ENCODE measurements at regions of chr22 and their contacts with region 1.

Region 1: DNA sequence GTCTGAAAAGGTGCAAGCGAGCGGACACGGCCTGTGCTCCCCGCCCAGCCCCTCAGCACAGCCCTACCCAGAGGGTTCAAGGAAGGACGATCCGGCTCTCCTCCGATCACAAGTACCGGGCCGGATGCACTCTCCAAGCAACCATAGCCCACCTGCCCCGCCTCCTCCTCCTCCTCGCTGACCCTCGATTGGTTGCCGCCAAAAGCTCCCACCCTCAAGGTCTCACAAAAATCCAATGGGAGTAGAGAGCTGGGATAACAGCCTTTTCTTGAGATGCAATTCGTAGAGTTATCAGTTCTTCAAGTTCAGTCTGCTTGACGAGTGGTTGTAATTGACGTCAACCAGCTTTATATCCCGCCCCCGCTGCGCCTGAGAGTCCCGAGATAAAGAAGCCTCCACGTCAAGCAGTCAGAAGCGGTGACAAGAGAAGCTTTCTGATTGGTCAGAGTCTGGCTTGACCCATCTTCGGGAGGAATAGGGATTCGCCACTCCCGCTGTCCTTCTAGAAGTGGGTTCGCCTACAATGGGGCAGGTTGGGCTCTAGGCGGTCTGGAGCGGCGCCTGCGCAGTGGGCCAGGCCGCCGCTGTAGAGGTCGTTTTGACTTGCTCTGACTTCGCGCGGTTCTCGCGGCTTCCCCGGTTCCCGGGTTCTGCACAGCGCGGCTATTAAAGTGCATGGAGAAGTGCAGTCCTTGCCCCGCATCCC is at the start of gene IFT27:
- DNase-seq: peak; percentile 98
- ATAC-seq: peak; percentile 97
- H3K4me3 Mint-ChIP-seq: peak within 1 kb of the TSS; percentile 84
- H3K27ac Mint-ChIP-seq: peak within 1 kb of the TSS; percentile 92
- H3K4me1 Mint-ChIP-seq: peaks cover 26% of the 10 kb centered on the region
- H3K27me3 Mint-ChIP-seq: no peaks in the 10 kb centered on the region
- total RNA-seq, gene IFT27: 14.9 to 21.6 TPM

Region 2: DNA sequence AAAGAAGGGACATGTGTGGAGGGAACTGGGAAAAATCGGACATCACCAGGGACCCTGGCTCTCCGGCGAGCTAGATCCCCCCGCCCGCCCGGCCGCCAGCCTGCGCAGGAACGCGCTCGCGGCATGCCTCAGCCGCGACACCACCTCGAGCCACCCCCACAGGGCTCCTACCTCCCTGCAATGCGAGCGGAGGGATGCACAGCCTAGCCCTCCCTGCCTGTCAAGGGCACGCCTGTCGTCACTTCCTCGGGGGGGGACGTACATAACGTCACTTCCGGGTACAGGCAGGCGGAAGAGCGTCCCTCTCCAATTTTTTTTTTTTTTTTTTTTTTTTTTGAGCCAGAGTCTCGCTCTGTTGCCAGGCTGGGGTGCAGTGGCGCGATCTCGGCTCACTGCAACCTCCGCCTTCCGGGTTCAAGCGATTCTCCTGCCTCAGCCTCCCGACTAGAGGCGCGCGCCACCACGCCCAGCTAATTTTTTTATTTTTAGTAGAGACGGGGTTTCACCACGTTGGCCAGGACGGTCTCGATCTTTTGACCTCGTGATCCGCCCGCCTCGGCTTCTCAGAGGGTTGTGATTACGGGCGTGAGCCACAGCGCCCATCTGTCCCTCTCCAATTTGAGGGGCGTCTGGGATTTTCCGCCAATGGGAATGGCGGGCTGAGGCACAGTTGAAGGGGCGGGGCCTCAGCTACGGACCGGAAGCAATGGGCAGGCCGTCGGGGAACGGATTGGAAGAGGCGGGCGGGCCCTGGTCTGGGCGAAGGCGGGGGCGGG is 294.5 kb before region 1 on chr22 and contains the start of gene TXN2:
- CTCF ChIA-PET with region 1: no interaction called
- POLR2A ChIA-PET with region 1: no interaction called
- intact Hi-C with region 1: loop called in 1 of 2 experiments (anchors 1 kb)
- DNase-seq: peak; percentile 97
- ATAC-seq: peak; percentile 89
- H3K4me3 Mint-ChIP-seq: peak within 1 kb of the TSS; percentile 81
- H3K27ac Mint-ChIP-seq: peak within 1 kb of the TSS; percentile 94
- H3K4me1 Mint-ChIP-seq: peaks cover 19% of the 10 kb centered on the region
- H3K27me3 Mint-ChIP-seq: no peaks in the 10 kb centered on the region
- total RNA-seq, gene TXN2: 95.5 to 99.1 TPM

Region 3: DNA sequence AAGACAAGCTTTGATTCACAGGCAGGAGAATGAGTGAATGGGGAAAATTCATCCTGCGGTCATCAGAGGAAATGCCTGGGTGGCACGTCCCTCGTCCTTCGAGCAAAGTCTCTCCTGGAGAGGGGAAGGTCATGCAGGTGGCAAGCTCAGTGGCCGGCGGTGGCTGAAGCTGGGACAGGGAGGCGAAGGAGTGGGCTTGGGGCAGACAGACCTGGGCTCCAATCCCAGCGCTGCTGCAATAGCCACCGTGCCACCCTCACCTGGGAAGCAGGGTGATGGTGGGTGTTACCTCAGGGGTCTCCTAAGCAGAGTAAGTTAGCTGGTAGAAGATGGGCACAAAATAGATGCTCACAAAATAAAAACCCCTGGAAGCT is 50.1 kb before region 1 on chr22:
- CTCF ChIA-PET with region 1: no interaction called
- POLR2A ChIA-PET with region 1: no interaction called
- intact Hi-C with region 1: no loop called
- DNase-seq: no peak
- ATAC-seq: no peak
- H3K4me3 Mint-ChIP-seq: no peak overlapping the region
- H3K27ac Mint-ChIP-seq: no peak overlapping the region
- H3K4me1 Mint-ChIP-seq: no peaks in the 10 kb centered on the region
- H3K27me3 Mint-ChIP-seq: peaks cover 16% of the 10 kb centered on the region

Region 4: DNA sequence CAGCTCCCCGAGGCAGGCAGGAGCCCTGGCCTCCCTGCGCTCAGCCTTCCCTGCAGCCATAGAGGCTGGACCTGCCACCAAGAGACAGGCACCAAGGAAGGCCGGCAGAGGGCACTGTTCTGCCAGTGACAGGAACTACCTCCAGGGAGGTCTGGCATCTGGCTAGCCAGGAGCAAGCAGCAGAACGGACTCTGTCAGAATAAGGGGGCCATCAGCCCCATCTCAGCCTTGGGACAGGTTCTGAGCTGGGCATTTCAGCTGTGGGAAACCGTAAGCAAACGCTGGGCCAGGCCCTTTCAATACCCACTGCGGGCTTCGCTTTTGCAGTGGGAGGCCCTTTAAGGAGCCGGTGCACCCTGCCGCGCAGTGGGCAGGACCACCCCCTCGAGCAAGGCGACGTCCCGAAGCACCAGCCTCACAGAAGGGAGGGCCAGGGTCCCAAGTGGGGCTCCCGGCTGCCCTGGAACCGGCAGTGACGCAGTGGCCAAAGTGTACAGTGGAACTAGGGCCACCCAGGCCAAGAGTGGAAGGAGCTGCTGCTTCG is 18.4 kb before region 1 on chr22:
- CTCF ChIA-PET with region 1: interaction called, 18 read pairs
- POLR2A ChIA-PET with region 1: no interaction called
- intact Hi-C with region 1: loop called in 1 of 2 experiments (anchors 1 kb)
- DNase-seq: peak; percentile 89
- ATAC-seq: peak; percentile 93
- H3K4me3 Mint-ChIP-seq: no peak overlapping the region
- H3K27ac Mint-ChIP-seq: peak overlapping the region; percentile 37
- H3K4me1 Mint-ChIP-seq: no peaks in the 10 kb centered on the region
- H3K27me3 Mint-ChIP-seq: peaks cover 4% of the 10 kb centered on the region

Region 5: GRCh38 chr22:36884349-36885117 is 108.4 kb after region 1 on chr22:
- CTCF ChIA-PET with region 1: interaction called, 3 read pairs
- POLR2A ChIA-PET with region 1: no interaction called
- intact Hi-C with region 1: loop called in 1 of 2 experiments (anchors 1 kb)
- DNase-seq: no peak
- ATAC-seq: peak; percentile 77
- H3K4me3 Mint-ChIP-seq: no peak overlapping the region
- H3K27ac Mint-ChIP-seq: no peak overlapping the region
- H3K4me1 Mint-ChIP-seq: peaks cover 40% of the 10 kb centered on the region
- H3K27me3 Mint-ChIP-seq: peaks cover 4% of the 10 kb centered on the region

Region 6: GRCh38 chr22:37051391-37052385 is 275.6 kb after region 1 on chr22 and contains the start of gene KCTD17:
- CTCF ChIA-PET with region 1: interaction called, 3 read pairs
- POLR2A ChIA-PET with region 1: no interaction called
- intact Hi-C with region 1: loop called in 1 of 2 experiments (anchors 5 kb)
- DNase-seq: peak; percentile 90
- ATAC-seq: peak; percentile 100
- H3K4me3 Mint-ChIP-seq: peak within 1 kb of the TSS; percentile 79
- H3K27ac Mint-ChIP-seq: peak within 1 kb of the TSS; percentile 67
- H3K4me1 Mint-ChIP-seq: peaks cover 6% of the 10 kb centered on the region
- H3K27me3 Mint-ChIP-seq: no peaks in the 10 kb centered on the region
- total RNA-seq, gene KCTD17: 32.5 to 36.8 TPM